ENCODE measurements at regions of chr1 and their contacts with region 1.

Region 1: GRCh38 chr1:157193702-157194391 is 55.7 kb upstream of the ETV3 start:
- DNase-seq: peak; percentile 74
- H3K4me3 ChIP-seq: no peak overlapping the region
- H3K27ac ChIP-seq: no peak overlapping the region
- H3K4me1 ChIP-seq: no peaks in the 10 kb centered on the region
- H3K27me3 ChIP-seq: peaks cover 6% of the 10 kb centered on the region
- CTCF ChIP-seq: peak; percentile 51

Region 2: GRCh38 chr1:157369808-157370521 is 176.1 kb after region 1 on chr1:
- intact Hi-C with region 1: loop called (anchors 10 kb)
- DNase-seq: peak; percentile 79
- H3K4me3 ChIP-seq: no peak overlapping the region
- H3K27ac ChIP-seq: no peak overlapping the region
- H3K4me1 ChIP-seq: no peaks in the 10 kb centered on the region
- H3K27me3 ChIP-seq: no peaks in the 10 kb centered on the region
- CTCF ChIP-seq: peak; percentile 95

Region 3: GRCh38 chr1:157490467-157491165 is 296.8 kb after region 1 on chr1:
- intact Hi-C with region 1: loop called (anchors 5 kb)
- DNase-seq: peak; percentile 89
- H3K4me3 ChIP-seq: no peak overlapping the region
- H3K27ac ChIP-seq: no peak overlapping the region
- H3K4me1 ChIP-seq: no peaks in the 10 kb centered on the region
- H3K27me3 ChIP-seq: no peaks in the 10 kb centered on the region
- CTCF ChIP-seq: peak; percentile 54

Measured in colonic mucosa (tissue), 4 donors.